ENCODE measurements at regions of chr1 and their contacts with region 1.

Region 1: DNA sequence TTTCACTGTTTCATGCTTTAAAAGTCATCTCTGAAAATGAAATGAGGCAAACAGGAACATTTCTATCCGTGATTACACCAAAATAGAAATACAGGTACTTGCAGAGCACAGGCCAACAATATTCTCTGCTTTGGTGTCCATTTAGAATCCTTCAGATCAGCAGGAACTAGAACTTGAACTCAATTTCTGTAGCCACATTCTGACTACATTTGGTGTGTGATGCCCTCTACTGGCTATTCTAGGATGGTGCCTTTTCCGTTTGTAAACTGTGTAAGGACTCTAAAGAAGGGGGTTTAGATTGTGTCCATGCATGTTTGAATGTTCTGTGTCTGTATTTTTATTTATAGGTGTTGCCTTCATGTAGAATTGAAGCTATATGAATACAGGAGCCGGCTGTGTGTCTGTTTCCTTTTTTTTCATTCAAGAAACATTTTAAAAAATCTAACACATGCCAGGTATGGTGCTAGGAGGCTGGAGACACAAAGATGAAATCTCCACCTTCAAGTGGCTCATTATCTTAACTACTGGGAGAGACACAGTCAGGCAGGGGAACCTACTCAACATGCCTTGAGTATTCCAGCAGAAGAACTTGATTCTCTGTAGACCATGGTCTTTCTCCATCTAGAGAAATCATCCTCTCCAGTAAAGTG is 7.6 kb upstream of the ZNF326 start:
- DNase-seq: no peak
- H3K4me3 ChIP-seq: no peak overlapping the region
- CTCF ChIP-seq: peak; percentile 69

Region 2: GRCh38 chr1:89780721-89781120 is 206.6 kb before region 1 on chr1:
- CTCF ChIA-PET with region 1: interaction called, 168 read pairs
- POLR2A ChIA-PET with region 1: no interaction called
- DNase-seq: peak; percentile 10
- H3K4me3 ChIP-seq: no peak overlapping the region
- CTCF ChIP-seq: peak; percentile 42

Region 3: GRCh38 chr1:89812992-89813391 is 174.3 kb before region 1 on chr1:
- CTCF ChIA-PET with region 1: interaction called, 95 read pairs
- POLR2A ChIA-PET with region 1: no interaction called
- DNase-seq: no peak
- H3K4me3 ChIP-seq: no peak overlapping the region
- CTCF ChIP-seq: no peak

Region 4: GRCh38 chr1:89843281-89844121 is 143.8 kb before region 1 on chr1:
- CTCF ChIA-PET with region 1: interaction called, 59 read pairs
- POLR2A ChIA-PET with region 1: interaction called, 3 read pairs
- DNase-seq: no peak
- H3K4me3 ChIP-seq: peak overlapping the region; percentile 83
- CTCF ChIP-seq: peak; percentile 64

Region 5: GRCh38 chr1:89974701-89975470 is 12.4 kb before region 1 on chr1:
- CTCF ChIA-PET with region 1: interaction called, 50 read pairs
- POLR2A ChIA-PET with region 1: no interaction called
- DNase-seq: no peak
- H3K4me3 ChIP-seq: no peak overlapping the region
- CTCF ChIP-seq: no peak

Region 6: DNA sequence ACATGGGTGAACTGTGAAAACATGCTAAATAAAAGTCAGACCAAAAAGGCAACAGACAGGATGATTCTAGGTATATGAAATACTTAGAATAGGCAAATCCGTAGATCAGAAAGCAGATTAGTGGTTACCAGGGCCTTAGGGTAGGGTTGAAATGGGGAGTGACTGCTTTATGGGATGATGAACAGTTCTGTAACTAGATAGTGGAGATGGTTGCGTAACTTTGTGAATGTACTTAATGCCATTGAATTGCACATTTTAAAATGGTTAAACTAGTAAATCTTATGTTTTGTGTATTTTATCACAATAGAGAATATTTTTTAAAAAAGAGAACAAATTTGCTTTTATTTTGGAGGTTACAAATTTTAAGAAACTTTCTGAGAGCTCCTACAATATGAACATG is 25.0 kb after region 1 on chr1:
- CTCF ChIA-PET with region 1: no interaction called
- POLR2A ChIA-PET with region 1: no interaction called
- DNase-seq: no peak
- H3K4me3 ChIP-seq: no peak overlapping the region
- CTCF ChIP-seq: no peak